PC-9 (cell line): ENCODE measurements at regions of chr4 and their contacts with region 1.

Region 1: GRCh38 chr4:185792384-185793115 is 19.4 kb downstream of the SORBS2 start:
- DNase-seq: peak; percentile 60 to 85
- H3K4me3 ChIP-seq: no peak overlapping the region
- H3K27ac ChIP-seq: peak overlapping the region; percentile 49
- H3K4me1 ChIP-seq: peaks cover 16% of the 10 kb centered on the region
- H3K27me3 ChIP-seq: no peaks in the 10 kb centered on the region
- CTCF ChIP-seq: no peak

Region 2: GRCh38 chr4:185874516-185875230 is 82.1 kb after region 1 on chr4:
- CTCF ChIA-PET with region 1: no interaction called
- POLR2A ChIA-PET with region 1: no interaction called
- intact Hi-C with region 1: loop called (anchors 10 kb)
- DNase-seq: peak in 1 of 2 experiments; percentile 49
- H3K4me3 ChIP-seq: no peak overlapping the region
- H3K27ac ChIP-seq: peak overlapping the region; percentile 65
- H3K4me1 ChIP-seq: peaks cover 11% of the 10 kb centered on the region
- H3K27me3 ChIP-seq: no peaks in the 10 kb centered on the region
- CTCF ChIP-seq: no peak